CD8-positive, alpha-beta T cell (primary cell): ENCODE measurements at regions of chr1 and their contacts with region 1.

Region 1: GRCh38 chr1:42913426-42914091 is 45.1 kb downstream of the SLC2A1 start:
- DNase-seq: peak in 6 of 9 experiments; percentile 45 to 87 (median 64)
- ATAC-seq: peak; percentile 99
- H3K4me3 ChIP-seq: no peak overlapping the region
- H3K4me3 Mint-ChIP-seq: no peak overlapping the region
- H3K27ac ChIP-seq: no peak overlapping the region
- H3K27ac Mint-ChIP-seq: no peak overlapping the region
- H3K4me1 ChIP-seq: no peaks in the 10 kb centered on the region
- H3K4me1 Mint-ChIP-seq: peaks cover 4% of the 10 kb centered on the region
- H3K27me3 ChIP-seq: no peaks in the 10 kb centered on the region
- H3K27me3 Mint-ChIP-seq: peaks cover 3% of the 10 kb centered on the region
- CTCF ChIP-seq: peak; percentile 85

Region 2: DNA sequence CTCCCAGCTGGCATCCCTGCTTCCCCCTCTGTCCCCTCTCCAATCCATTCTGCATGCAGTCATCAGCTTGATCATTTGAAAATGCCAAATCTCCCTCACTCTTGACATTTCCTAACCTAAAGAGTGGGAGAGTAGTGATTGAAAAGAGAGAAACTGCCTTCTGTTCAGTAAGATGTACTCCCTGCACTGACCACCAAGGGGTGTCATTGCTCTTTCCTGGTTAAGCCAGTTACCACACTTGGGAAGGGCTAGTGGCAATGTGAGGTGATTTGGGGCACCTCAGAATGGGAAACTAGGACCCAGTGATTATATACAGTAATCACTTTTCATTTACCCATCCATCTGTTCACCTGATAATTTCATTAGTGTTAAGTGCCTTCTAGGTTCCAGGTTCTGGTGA is 135.7 kb before region 1 on chr1:
- CTCF ChIA-PET with region 1: interaction called, 11 read pairs
- POLR2A ChIA-PET with region 1: no interaction called
- intact Hi-C with region 1: loop called (anchors 1 kb)
- DNase-seq: peak in 5 of 9 experiments; percentile 21 to 52 (median 27)
- ATAC-seq: peak; percentile 68
- H3K4me3 ChIP-seq: no peak overlapping the region
- H3K4me3 Mint-ChIP-seq: no peak overlapping the region
- H3K27ac ChIP-seq: no peak overlapping the region
- H3K27ac Mint-ChIP-seq: no peak overlapping the region
- H3K4me1 ChIP-seq: no peaks in the 10 kb centered on the region
- H3K4me1 Mint-ChIP-seq: peaks cover 10% of the 10 kb centered on the region
- H3K27me3 ChIP-seq: no peaks in the 10 kb centered on the region
- H3K27me3 Mint-ChIP-seq: no peaks in the 10 kb centered on the region
- CTCF ChIP-seq: peak; percentile 57

Region 3: GRCh38 chr1:42931108-42931539 is 17.6 kb after region 1 on chr1:
- CTCF ChIA-PET with region 1: interaction called, 14 read pairs
- POLR2A ChIA-PET with region 1: interaction called, 6 read pairs
- intact Hi-C with region 1: no loop called
- DNase-seq: peak in 7 of 9 experiments; percentile 46 to 89 (median 67)
- ATAC-seq: peak; percentile 49
- H3K4me3 ChIP-seq: peak overlapping the region; percentile 22 to 43
- H3K4me3 Mint-ChIP-seq: peak overlapping the region; percentile 70
- H3K27ac ChIP-seq: peak overlapping the region; percentile 63 to 90
- H3K27ac Mint-ChIP-seq: peak overlapping the region; percentile 95
- H3K4me1 ChIP-seq: peaks cover 67% of the 10 kb centered on the region
- H3K4me1 Mint-ChIP-seq: peaks cover 67% of the 10 kb centered on the region
- H3K27me3 ChIP-seq: no peaks in the 10 kb centered on the region
- H3K27me3 Mint-ChIP-seq: no peaks in the 10 kb centered on the region
- CTCF ChIP-seq: peak; percentile 57

Region 4: DNA sequence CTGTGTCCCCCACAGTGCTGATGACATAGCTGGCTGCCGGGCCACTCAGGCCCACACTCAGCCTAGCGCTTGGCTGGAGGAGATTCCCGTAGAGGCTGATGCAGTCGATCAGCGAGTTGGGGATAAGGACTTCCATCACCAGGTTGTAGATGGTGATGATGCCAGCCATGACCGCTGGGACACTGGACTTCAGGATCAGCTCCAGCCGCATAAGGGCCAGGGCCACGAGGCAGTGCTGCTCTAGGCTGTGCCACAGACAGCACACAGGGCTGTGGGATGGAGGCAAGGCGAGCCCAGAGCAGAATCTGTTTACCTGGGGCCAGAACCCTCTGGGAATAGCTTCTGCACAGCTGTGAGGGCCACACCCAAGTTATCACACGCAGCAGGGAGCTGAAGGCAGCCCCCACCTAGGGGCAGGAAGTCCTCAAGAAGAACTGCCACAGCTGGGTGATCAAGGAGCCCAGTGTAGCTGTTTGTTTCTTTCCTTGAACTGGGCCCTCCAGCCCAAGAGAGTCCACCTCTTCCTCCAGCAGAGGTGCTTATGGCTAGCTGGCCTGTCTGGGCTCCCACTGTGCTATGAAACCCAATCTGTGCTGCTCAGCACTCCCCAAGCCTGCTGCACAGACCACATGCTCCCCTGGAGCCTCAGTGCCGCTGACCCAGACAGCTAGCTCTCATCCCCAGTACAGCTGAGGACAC is 38.9 kb after region 1 on chr1:
- CTCF ChIA-PET with region 1: interaction called, 10 read pairs
- POLR2A ChIA-PET with region 1: no interaction called
- intact Hi-C with region 1: no loop called
- DNase-seq: peak in 7 of 9 experiments; percentile 39 to 76 (median 48)
- ATAC-seq: peak; percentile 59
- H3K4me3 ChIP-seq: peak overlapping the region; percentile 21 to 33
- H3K4me3 Mint-ChIP-seq: peak overlapping the region; percentile 50
- H3K27ac ChIP-seq: peak overlapping the region; percentile 30 to 73
- H3K27ac Mint-ChIP-seq: peak overlapping the region; percentile 76
- H3K4me1 ChIP-seq: peaks cover 93% of the 10 kb centered on the region
- H3K4me1 Mint-ChIP-seq: peaks cover 88% of the 10 kb centered on the region
- H3K27me3 ChIP-seq: no peaks in the 10 kb centered on the region
- H3K27me3 Mint-ChIP-seq: no peaks in the 10 kb centered on the region
- CTCF ChIP-seq: no peak

Region 5: DNA sequence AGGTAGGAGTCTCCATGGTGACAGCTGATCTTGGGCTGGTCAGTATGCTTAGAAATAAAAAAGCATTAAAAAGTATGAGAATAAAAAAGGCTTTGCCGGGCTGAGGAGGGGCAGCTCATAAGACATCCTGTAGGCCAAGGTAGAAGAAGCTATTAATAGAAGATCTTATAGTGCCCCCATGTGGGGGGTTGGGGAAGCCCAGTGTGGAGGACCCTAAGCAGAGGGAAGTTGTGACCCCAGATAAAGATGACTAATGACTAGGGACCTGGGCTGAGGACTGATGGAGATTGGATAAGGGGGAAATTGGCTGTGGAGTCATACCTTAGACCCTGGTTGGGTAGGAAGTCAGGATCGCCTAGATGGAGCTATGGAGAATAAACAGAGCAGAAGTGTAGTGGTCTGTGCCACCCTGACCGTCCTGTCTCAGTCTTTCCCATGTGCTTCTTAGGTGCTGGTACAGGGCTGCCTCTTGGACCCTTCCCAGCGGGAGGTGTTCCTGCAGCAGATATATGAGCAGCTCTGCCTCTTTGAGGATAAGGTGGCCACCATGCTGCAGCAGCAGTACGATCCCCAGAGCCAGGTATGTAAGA is 501.2 kb after region 1 on chr1:
- CTCF ChIA-PET with region 1: interaction called, 3 read pairs
- POLR2A ChIA-PET with region 1: no interaction called
- intact Hi-C with region 1: loop called in 1 of 2 experiments (anchors 2 kb)
- DNase-seq: peak; percentile 37 to 75 (median 70)
- ATAC-seq: peak; percentile 99
- H3K4me3 ChIP-seq: no peak overlapping the region
- H3K4me3 Mint-ChIP-seq: no peak overlapping the region
- H3K27ac ChIP-seq: no peak overlapping the region
- H3K27ac Mint-ChIP-seq: peak overlapping the region; percentile 6
- H3K4me1 ChIP-seq: no peaks in the 10 kb centered on the region
- H3K4me1 Mint-ChIP-seq: no peaks in the 10 kb centered on the region
- H3K27me3 ChIP-seq: no peaks in the 10 kb centered on the region
- H3K27me3 Mint-ChIP-seq: no peaks in the 10 kb centered on the region
- CTCF ChIP-seq: peak; percentile 60